ENCODE measurements at regions of chr6 and their contacts with region 1.

Region 1: DNA sequence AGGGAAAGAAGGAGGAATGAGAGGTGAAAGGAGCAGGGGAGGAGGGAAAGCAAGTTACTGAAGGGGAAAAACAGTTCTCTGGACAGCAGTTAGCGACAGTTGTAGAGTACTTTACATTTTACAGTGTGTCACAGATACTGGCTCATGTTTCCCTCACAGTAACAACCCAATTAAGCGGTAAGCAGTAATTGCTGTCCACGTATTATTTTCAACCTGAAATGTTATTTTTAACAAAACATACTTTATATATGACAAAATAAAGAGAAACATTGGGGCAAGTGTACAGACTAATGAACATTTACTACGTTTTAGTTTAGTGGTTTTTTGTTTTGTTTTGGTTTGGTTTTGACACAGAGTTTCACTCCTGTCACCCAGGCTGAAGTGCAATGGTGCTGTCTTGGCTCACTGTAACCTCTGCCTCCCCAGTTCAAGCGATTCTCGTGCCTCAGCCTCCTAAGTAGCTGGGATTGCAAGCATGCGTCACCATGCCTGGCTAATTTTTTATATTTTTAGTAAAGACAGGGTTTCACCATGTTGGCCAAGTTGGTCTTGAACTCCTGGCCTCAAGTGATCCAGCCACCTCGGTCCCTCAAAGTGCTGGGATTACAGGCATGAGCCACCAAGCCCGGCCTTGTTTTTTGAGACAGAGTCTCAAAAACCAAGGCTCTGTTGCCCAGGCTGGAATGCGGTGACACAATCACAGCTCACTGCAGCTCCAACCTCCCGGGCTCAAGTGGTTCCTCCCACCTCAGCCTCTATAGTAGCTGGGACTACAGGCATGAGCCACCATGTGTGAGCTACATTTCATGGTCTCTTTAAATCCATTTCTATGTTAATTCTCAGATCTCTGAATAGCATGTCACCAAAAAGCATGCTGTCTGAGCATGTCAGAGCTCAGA is 22.6 kb upstream of the BTN3A2 start:
- DNase-seq: peak in 1 of 3 donors; percentile 15
- H3K4me3 ChIP-seq: peak overlapping the region in 3 of 7 experiments; percentile 28 to 72 (median 30)
- H3K27ac ChIP-seq: no peak overlapping the region
- H3K4me1 ChIP-seq: peaks cover 0 to 4% (median 2%) of the 10 kb centered on the region in 4 experiments
- H3K27me3 ChIP-seq: no peaks in the 10 kb centered on the region

Region 2: GRCh38 chr6:25844518-25844917 is 497.8 kb before region 1 on chr6:
- CTCF ChIA-PET with region 1: no interaction called
- POLR2A ChIA-PET with region 1: no interaction called
- DNase-seq: no peak
- H3K4me3 ChIP-seq: no peak overlapping the region
- H3K27ac ChIP-seq: no peak overlapping the region
- H3K4me1 ChIP-seq: no peaks in the 10 kb centered on the region
- H3K27me3 ChIP-seq: no peaks in the 10 kb centered on the region

Region 3: GRCh38 chr6:26285143-26286134 is 56.9 kb before region 1 on chr6:
- CTCF ChIA-PET with region 1: no interaction called
- POLR2A ChIA-PET with region 1: no interaction called
- DNase-seq: peak; percentile 99 to 100 (median 100)
- H3K4me3 ChIP-seq: peak overlapping the region; percentile 47 to 96 (median 79)
- H3K27ac ChIP-seq: peak overlapping the region; percentile 80 to 94
- H3K4me1 ChIP-seq: peaks cover 3 to 26% (median 21%) of the 10 kb centered on the region in 4 experiments
- H3K27me3 ChIP-seq: no peaks in the 10 kb centered on the region

Region 4: GRCh38 chr6:26327450-26328264 is 14.7 kb before region 1 on chr6:
- CTCF ChIA-PET with region 1: interaction called, 29 read pairs
- POLR2A ChIA-PET with region 1: no interaction called
- DNase-seq: peak; percentile 64 to 81 (median 78)
- H3K4me3 ChIP-seq: peak overlapping the region in 6 of 7 experiments; percentile 29 to 79 (median 67)
- H3K27ac ChIP-seq: peak overlapping the region in 1 of 2 experiments; percentile 21
- H3K4me1 ChIP-seq: peaks cover 7 to 40% (median 29%) of the 10 kb centered on the region in 4 experiments
- H3K27me3 ChIP-seq: peaks cover 14 to 47% (median 36%) of the 10 kb centered on the region in 5 experiments

Region 5: GRCh38 chr6:26360451-26361416 is 18.4 kb after region 1 on chr6:
- CTCF ChIA-PET with region 1: interaction called, 11 read pairs
- POLR2A ChIA-PET with region 1: no interaction called
- DNase-seq: peak in 1 of 3 donors; percentile 45
- H3K4me3 ChIP-seq: no peak overlapping the region
- H3K27ac ChIP-seq: no peak overlapping the region
- H3K4me1 ChIP-seq: peaks cover 5 to 17% (median 10%) of the 10 kb centered on the region in 4 experiments
- H3K27me3 ChIP-seq: no peaks in the 10 kb centered on the region

Region 6: GRCh38 chr6:26493258-26493657 is 150.9 kb after region 1 on chr6:
- CTCF ChIA-PET with region 1: interaction called, 32 read pairs
- POLR2A ChIA-PET with region 1: no interaction called
- DNase-seq: peak; percentile 58 to 80 (median 76)
- H3K4me3 ChIP-seq: no peak overlapping the region
- H3K27ac ChIP-seq: no peak overlapping the region
- H3K4me1 ChIP-seq: peaks cover 0 to 10% (median 2%) of the 10 kb centered on the region in 4 experiments
- H3K27me3 ChIP-seq: no peaks in the 10 kb centered on the region

Region 7: DNA sequence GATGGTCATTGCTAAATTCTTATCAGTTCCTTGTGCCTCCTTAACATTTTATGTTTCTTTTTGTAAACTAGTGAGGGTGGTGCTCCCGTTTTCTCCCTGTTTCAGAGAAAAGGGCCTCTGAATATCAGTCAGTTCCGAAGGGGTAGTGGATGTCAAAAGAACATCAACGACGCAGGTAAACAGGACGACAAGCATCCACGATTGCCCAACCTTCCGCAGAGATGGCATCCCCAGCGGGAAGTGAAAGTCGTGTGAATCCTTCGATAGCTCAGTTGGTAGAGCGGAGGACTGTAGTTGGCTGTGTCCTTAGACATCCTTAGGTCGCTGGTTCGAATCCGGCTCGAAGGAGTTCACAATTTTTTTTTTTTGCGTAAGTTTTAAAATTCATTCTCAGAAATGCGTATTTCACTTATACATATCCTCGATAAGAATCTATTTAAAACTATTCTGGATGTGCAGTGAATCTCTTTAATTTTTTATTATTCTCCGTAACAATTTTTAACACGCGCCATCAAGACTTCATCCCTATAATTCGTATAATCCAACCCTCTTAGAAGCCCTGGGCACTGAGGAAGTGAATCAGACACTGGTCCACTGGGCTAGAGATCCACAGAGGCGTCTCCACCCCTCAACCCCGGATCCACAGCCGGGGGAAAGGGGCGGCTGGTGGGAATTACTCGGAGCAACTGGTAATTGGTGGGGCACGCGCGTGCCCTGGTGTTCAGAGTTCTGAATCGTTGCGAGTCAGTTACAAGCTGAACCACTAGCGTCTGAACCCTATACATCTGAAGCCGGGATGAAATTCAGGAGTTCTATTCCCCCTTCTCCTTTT is 226.5 kb after region 1 on chr6:
- CTCF ChIA-PET with region 1: interaction called, 12 read pairs
- POLR2A ChIA-PET with region 1: no interaction called
- DNase-seq: peak; percentile 94 to 98 (median 96)
- H3K4me3 ChIP-seq: peak overlapping the region; percentile 50 to 97 (median 89)
- H3K27ac ChIP-seq: peak overlapping the region; percentile 13 to 78
- H3K4me1 ChIP-seq: peaks cover 0 to 10% (median 1%) of the 10 kb centered on the region in 4 experiments
- H3K27me3 ChIP-seq: no peaks in the 10 kb centered on the region

Region 8: GRCh38 chr6:26596579-26597388 is 254.4 kb after region 1 on chr6 and contains the start of gene ABT1:
- CTCF ChIA-PET with region 1: interaction called, 16 read pairs
- POLR2A ChIA-PET with region 1: no interaction called
- DNase-seq: peak; percentile 98 to 99 (median 99)
- H3K4me3 ChIP-seq: peak within 1 kb of the TSS; percentile 87 to 100 (median 96)
- H3K27ac ChIP-seq: peak within 1 kb of the TSS; percentile 93
- H3K4me1 ChIP-seq: peaks cover 3 to 31% (median 19%) of the 10 kb centered on the region in 4 experiments
- H3K27me3 ChIP-seq: peaks cover 4 to 26% (median 11%) of the 10 kb centered on the region in 5 experiments

Measured in common myeloid progenitor, CD34-positive (primary cell).